ENCODE measurements at regions of chr17 and their contacts with region 1.

Region 1: GRCh38 chr17:58352014-58352842 is at the start of gene SUPT4H1:
- DNase-seq: peak; percentile 98
- H3K4me3 ChIP-seq: peak within 1 kb of the TSS; percentile 79
- H3K27ac ChIP-seq: peak within 1 kb of the TSS; percentile 85
- H3K4me1 ChIP-seq: peaks cover 32% of the 10 kb centered on the region
- CTCF ChIP-seq: no peak
- total RNA-seq, gene SUPT4H1: 41.1 and 56.5 TPM in 2 replicates

Region 2: DNA sequence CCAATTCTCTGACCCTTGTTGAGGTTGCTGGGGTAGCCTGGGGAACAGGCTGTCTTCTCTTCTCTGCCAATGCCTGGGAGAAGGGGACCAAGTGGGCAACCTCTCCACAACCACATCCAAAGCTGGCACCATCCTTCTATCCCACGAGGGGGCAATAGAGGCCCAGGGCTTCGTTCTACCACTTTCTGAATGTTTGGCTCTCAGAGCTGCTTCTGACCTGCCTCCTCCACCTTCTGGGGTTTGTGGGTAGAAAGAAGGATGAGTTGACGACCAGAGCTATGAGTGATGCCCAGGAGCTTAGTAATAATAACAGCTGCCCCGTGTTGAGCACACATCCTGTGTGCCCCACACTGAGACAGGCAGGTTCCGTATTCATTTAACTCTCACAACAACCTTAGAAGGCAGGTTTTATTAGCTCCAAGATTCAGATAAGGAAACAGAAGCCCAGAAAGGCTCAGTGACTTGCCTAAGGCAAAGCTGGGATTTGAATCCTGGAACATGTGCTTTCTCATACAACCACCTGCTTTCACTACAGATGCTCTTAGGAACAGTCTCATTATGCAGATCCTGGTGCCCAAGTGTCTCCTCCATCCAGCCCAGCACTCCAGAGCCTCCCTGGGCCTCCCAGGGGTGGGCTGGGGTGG is 34.7 kb before region 1 on chr17:
- CTCF ChIA-PET with region 1: interaction called, 7 read pairs
- POLR2A ChIA-PET with region 1: interaction called, 6 read pairs
- intact Hi-C with region 1: loop called (anchors 1 kb)
- DNase-seq: peak; percentile 89
- H3K4me3 ChIP-seq: no peak overlapping the region
- H3K27ac ChIP-seq: peak overlapping the region; percentile 48
- H3K4me1 ChIP-seq: peaks cover 15% of the 10 kb centered on the region
- CTCF ChIP-seq: peak; percentile 90

Region 3: DNA sequence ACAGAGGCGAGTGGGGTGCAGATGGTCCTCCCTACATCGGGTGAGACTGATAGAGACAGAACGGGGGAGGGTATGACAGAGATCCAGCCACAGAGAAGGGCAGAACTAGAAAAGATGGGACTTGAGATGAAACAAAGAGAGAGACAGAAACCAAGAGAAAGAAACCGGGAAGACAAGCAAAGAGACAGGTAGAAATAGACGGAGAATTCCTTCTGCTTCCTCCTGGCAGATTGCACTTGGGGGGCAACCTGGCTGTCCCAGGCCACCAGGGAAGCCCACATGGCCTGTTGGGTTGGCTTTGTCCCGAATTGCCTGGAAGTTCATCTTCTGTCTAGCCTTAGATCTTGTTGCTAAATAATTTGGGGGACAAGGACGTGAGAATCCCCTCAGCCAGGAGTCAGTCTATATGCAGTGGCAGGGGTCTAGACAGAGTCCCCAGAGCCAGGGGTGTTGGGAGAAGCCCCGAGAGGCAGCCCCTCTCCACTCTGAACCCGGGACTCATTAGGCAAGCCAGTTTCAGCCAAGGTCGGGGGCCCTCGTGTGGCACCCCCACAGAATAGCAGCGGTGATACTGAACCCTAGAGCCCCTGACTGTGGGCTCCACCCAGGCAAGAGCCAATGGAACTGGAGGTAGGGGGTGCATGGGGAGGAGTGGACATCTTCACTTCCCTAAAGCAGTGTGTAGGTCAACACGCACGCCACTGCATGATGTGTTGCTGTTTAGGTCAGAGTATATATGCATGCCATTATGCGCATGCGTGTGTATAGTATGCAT is 23.0 kb before region 1 on chr17:
- CTCF ChIA-PET with region 1: no interaction called
- POLR2A ChIA-PET with region 1: interaction called, 179 read pairs
- intact Hi-C with region 1: no loop called
- DNase-seq: peak; percentile 92
- H3K4me3 ChIP-seq: peak overlapping the region; percentile 98
- H3K27ac ChIP-seq: peak overlapping the region; percentile 99
- H3K4me1 ChIP-seq: peaks cover 55% of the 10 kb centered on the region
- CTCF ChIP-seq: peak; percentile 78

Region 4: GRCh38 chr17:58369214-58370031 is 17.2 kb after region 1 on chr17:
- CTCF ChIA-PET with region 1: no interaction called
- POLR2A ChIA-PET with region 1: interaction called, 5 read pairs
- intact Hi-C with region 1: loop called (anchors 2 kb)
- DNase-seq: no peak
- H3K4me3 ChIP-seq: no peak overlapping the region
- H3K27ac ChIP-seq: no peak overlapping the region
- H3K4me1 ChIP-seq: peaks cover 45% of the 10 kb centered on the region
- CTCF ChIP-seq: no peak

Region 5: DNA sequence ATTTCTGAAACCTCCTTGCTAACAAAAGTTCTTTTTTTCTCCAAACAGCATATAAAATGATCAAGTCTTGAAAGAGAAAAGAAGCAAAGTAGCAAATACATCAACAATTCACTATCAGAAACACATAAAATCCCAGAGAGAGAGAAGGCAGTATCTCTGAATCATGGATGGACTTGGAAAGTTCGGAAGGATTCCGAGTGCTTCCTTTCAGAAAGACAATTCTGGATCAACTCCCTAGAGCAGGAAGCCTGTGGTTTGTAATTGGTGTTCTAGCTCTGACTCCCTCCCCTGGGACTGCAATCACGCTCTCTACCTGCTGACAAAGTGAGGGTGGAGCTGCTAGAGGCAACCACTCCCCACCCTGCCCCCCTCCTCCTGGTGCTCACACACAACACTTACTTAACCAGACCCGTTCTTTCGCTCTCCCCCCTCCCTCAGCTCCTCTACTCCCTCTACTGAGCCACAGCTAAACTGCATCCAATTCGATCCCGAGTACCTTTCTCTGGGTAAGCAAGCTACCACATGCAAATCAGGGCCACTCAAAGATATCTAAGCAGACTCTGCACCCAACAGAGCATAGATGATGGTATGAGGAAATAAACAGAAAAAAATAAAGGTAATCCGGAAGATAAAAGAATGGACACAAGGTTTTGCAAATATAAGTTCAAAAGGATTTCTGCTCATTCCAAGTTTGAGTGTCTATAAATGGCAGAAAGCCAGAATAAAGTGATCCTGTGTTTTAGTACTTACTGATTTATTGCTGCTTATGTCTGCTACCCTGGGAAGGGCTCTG is 65.3 kb after region 1 on chr17 and contains the start of gene RNF43:
- CTCF ChIA-PET with region 1: interaction called, 5 read pairs
- POLR2A ChIA-PET with region 1: interaction called, 10 read pairs
- intact Hi-C with region 1: loop called (anchors 1 kb)
- DNase-seq: peak; percentile 89
- H3K4me3 ChIP-seq: peak within 1 kb of the TSS; percentile 8
- H3K27ac ChIP-seq: no peak within 1 kb of the TSS
- H3K4me1 ChIP-seq: peaks cover 18% of the 10 kb centered on the region
- CTCF ChIP-seq: peak; percentile 87
- total RNA-seq, gene RNF43: 0.19 and 0.39 TPM in 2 replicates

Region 6: GRCh38 chr17:58605470-58605869 is 253.2 kb after region 1 on chr17:
- CTCF ChIA-PET with region 1: no interaction called
- POLR2A ChIA-PET with region 1: no interaction called
- intact Hi-C with region 1: no loop called
- DNase-seq: no peak
- H3K4me3 ChIP-seq: no peak overlapping the region
- H3K27ac ChIP-seq: no peak overlapping the region
- H3K4me1 ChIP-seq: no peaks in the 10 kb centered on the region
- CTCF ChIP-seq: no peak